ENCODE measurements at regions of chr2 and their contacts with region 1.

Region 1: DNA sequence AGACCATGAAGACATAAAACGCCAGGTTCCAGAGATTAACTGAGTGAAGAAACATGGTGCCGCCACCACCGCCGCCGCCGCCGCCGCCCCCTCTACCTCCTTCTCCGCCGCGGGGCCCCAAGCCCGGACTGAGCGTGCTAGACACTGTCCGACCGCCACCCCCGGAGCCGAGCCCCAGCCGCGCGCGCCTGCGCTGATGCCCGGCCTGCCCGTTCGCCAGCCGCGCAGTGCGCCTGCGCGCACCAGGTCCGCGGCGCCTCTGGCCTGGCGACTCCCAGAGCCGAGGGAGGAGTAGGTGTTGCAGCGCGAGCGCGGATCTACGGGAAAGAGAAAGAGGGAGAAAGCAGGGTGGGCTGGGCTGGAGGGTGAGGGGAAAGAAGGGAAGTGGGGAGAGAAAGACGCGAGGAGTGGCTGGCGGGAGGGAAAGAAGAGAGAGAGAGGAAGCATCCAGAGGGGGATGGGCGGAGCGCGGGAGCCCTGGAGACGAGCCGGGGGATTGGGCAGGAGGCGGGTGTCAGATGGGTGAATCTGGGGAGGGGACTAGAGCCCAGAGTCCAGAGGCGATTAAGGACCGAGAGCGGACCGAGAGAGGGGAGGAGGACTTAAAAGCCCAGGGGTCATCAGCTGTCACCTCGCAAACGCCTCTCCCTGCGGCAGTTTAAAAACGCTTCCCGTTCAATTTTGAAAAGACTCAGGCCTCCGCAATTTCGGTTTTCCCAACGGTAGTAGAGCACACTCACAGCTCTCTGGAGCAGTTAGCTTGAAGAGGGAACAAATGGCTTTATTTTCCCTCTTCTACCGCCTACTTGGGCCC is at the start of gene PGAP1:
- DNase-seq: peak; percentile 66 to 95 (median 72)
- ATAC-seq: peak; percentile 89
- H3K4me3 ChIP-seq: peak within 1 kb of the TSS; percentile 91
- H3K4me3 Mint-ChIP-seq: peak within 1 kb of the TSS; percentile 85 to 100 (median 96)
- H3K27ac ChIP-seq: peak within 1 kb of the TSS; percentile 79
- H3K27ac Mint-ChIP-seq: peak within 1 kb of the TSS; percentile 90 to 97 (median 94)
- H3K4me1 ChIP-seq: peaks cover 4 to 6% of the 10 kb centered on the region in 2 donors
- H3K4me1 Mint-ChIP-seq: peaks cover 22 to 43% (median 39%) of the 10 kb centered on the region in 7 donors
- H3K27me3 ChIP-seq: no peaks in the 10 kb centered on the region
- H3K27me3 Mint-ChIP-seq: peaks cover 0 to 2% (median 0%) of the 10 kb centered on the region in 5 donors
- total RNA-seq, gene PGAP1: 6.0 to 48.4 (median 6.9) TPM

Region 2: DNA sequence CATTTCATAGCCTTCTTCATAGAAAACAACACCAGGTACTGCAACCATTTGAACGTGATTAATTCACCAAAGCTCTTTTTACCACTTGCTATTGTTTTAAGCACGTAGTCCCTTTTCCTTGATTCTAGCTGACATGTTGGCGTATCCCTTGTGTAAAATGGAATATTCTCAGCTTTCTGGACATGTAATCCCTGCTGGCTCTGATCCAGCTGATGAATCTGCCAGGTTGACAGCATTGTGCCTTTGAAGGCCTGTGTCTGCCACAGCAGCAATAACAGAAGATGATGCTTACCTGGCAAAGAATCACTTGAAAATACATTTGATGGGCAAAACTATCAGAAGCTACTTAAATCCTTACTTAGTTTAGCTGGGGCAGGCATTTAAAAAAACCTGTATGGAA is 368.3 kb before region 1 on chr2:
- CTCF ChIA-PET with region 1: no interaction called
- POLR2A ChIA-PET with region 1: no interaction called
- intact Hi-C with region 1: no loop called
- DNase-seq: no peak
- ATAC-seq: no peak
- H3K4me3 ChIP-seq: no peak overlapping the region
- H3K4me3 Mint-ChIP-seq: no peak overlapping the region
- H3K27ac ChIP-seq: no peak overlapping the region
- H3K27ac Mint-ChIP-seq: no peak overlapping the region
- H3K4me1 ChIP-seq: no peaks in the 10 kb centered on the region
- H3K4me1 Mint-ChIP-seq: no peaks in the 10 kb centered on the region
- H3K27me3 ChIP-seq: no peaks in the 10 kb centered on the region
- H3K27me3 Mint-ChIP-seq: peaks cover 12 to 25% (median 23%) of the 10 kb centered on the region in 5 donors

Region 3: GRCh38 chr2:196798980-196799379 is 127.8 kb before region 1 on chr2:
- CTCF ChIA-PET with region 1: interaction called, 3 read pairs
- POLR2A ChIA-PET with region 1: interaction called, 8 read pairs
- intact Hi-C with region 1: loop called (anchors 1 kb)
- DNase-seq: peak in 1 of 9 donors; percentile 1
- ATAC-seq: peak; percentile 1
- H3K4me3 ChIP-seq: peak overlapping the region; percentile 98
- H3K4me3 Mint-ChIP-seq: peak overlapping the region; percentile 85 to 99 (median 96)
- H3K27ac ChIP-seq: peak overlapping the region; percentile 73
- H3K27ac Mint-ChIP-seq: peak overlapping the region; percentile 89 to 99 (median 91)
- H3K4me1 ChIP-seq: peaks cover 4 to 6% of the 10 kb centered on the region in 2 donors
- H3K4me1 Mint-ChIP-seq: peaks cover 17 to 52% (median 38%) of the 10 kb centered on the region in 7 donors
- H3K27me3 ChIP-seq: no peaks in the 10 kb centered on the region
- H3K27me3 Mint-ChIP-seq: peaks cover 0 to 4% (median 4%) of the 10 kb centered on the region in 5 donors

Region 4: DNA sequence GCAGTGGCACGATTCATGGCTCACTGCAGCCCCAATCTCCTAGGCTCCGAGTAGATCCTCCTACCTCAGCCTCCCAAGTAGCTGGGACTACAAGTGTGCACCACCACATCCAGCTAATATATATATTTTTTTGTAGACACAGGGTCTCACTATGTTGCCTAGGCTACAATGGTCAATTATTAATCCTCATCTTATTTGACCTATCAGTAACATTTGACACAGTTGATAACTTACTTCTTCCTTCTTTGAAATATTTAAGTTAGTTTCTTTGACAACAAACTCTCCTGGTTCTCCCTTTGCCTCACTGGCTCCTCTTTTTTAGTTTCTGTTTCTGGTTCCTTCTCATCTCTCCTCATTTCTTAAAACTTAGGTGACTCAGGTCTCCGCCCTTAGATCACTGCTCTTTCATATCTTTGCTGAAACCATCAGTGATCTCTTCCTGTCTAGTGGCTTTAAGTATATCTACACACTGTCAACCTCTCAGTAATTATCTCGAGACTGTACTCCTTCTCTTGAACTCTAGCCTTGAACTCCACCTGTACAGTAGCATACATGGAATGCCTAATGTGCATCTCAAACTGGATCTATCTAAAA is 11.8 kb before region 1 on chr2:
- CTCF ChIA-PET with region 1: interaction called, 6 read pairs
- POLR2A ChIA-PET with region 1: interaction called, 16 read pairs
- intact Hi-C with region 1: loop called (anchors 1 kb)
- DNase-seq: peak in 7 of 9 donors; percentile 39 to 67 (median 54)
- ATAC-seq: peak; percentile 97
- H3K4me3 ChIP-seq: peak overlapping the region; percentile 32
- H3K4me3 Mint-ChIP-seq: peak overlapping the region; percentile 6 to 84 (median 66)
- H3K27ac ChIP-seq: peak overlapping the region; percentile 51
- H3K27ac Mint-ChIP-seq: peak overlapping the region; percentile 75 to 97 (median 87)
- H3K4me1 ChIP-seq: peaks cover 16 to 19% of the 10 kb centered on the region in 2 donors
- H3K4me1 Mint-ChIP-seq: peaks cover 11 to 47% (median 26%) of the 10 kb centered on the region in 7 donors
- H3K27me3 ChIP-seq: no peaks in the 10 kb centered on the region
- H3K27me3 Mint-ChIP-seq: no peaks in the 10 kb centered on the region

Region 5: DNA sequence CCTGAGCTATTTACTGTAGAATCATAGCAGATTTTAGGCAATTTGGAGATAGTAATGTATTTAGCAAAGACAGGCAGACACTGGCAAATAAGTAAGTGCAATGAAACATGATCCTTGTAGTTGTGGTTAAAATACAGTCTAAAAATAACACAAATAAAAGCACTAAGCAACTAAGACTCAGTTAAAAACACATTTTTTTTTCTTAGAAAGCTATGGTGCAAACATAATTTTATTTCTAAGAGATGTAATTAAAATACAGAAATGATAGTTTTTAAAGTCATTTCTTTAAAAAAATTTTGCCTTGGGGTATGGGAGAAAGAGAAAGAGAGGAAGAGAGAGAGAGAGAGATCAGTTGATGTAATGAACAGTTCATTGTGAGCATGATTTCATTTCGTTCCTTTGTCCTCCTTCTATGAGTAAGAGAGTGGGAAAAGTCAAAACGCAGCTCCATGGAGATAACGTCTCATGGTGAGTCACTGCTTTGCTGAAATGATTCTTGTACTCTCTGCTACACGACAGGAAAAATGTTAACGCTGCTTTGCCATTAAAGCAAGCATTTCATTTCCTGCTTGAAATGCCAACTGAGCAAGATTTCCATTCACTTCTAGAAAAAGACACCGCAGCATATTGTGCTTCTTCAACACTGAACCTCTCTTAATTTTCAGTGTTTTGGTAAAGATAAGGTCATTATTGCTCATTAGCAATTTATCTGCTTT is 61.0 kb after region 1 on chr2:
- CTCF ChIA-PET with region 1: no interaction called
- POLR2A ChIA-PET with region 1: no interaction called
- intact Hi-C with region 1: loop called (anchors 1 to 5 kb)
- DNase-seq: peak in 1 of 9 donors; percentile 36
- ATAC-seq: peak; percentile 61
- H3K4me3 ChIP-seq: no peak overlapping the region
- H3K4me3 Mint-ChIP-seq: peak overlapping the region in 4 of 10 donors; percentile 1 to 85 (median 14)
- H3K27ac ChIP-seq: no peak overlapping the region
- H3K27ac Mint-ChIP-seq: peak overlapping the region; percentile 17 to 91 (median 76)
- H3K4me1 ChIP-seq: peaks cover 0 to 14% of the 10 kb centered on the region in 2 donors
- H3K4me1 Mint-ChIP-seq: peaks cover 21 to 53% (median 46%) of the 10 kb centered on the region in 7 donors
- H3K27me3 ChIP-seq: no peaks in the 10 kb centered on the region
- H3K27me3 Mint-ChIP-seq: no peaks in the 10 kb centered on the region

Region 6: DNA sequence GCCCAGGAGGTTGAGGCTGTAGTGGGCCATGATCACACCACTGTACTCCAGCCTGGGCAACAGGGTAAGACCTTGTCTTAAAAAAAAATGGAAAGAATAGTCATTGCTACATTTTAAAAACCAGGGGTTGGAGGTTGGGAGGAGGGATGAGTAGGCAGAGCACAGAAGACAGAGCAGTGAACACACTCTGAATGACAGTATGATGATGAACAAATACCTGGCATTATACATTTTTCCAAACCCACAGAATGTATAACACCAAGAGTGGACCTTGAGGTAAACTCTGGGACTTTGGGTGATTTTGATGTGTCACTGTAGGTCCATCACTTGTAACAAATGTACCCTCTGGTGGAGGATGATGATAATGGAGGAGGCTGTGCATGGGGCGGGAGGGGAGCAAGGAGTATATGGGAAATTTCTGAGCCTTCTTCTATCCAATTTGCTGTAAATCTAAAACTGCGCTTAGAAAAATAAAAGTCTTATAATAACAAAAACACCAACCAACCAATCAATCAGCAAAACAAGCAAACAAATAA is 111.2 kb after region 1 on chr2:
- CTCF ChIA-PET with region 1: no interaction called
- POLR2A ChIA-PET with region 1: no interaction called
- intact Hi-C with region 1: no loop called
- DNase-seq: no peak
- ATAC-seq: no peak
- H3K4me3 ChIP-seq: no peak overlapping the region
- H3K4me3 Mint-ChIP-seq: no peak overlapping the region
- H3K27ac ChIP-seq: no peak overlapping the region
- H3K27ac Mint-ChIP-seq: peak overlapping the region in 7 of 9 donors; percentile 15 to 83 (median 69)
- H3K4me1 ChIP-seq: peaks cover 3 to 6% of the 10 kb centered on the region in 2 donors
- H3K4me1 Mint-ChIP-seq: peaks cover 23 to 80% (median 57%) of the 10 kb centered on the region in 7 donors
- H3K27me3 ChIP-seq: no peaks in the 10 kb centered on the region
- H3K27me3 Mint-ChIP-seq: no peaks in the 10 kb centered on the region

Region 7: DNA sequence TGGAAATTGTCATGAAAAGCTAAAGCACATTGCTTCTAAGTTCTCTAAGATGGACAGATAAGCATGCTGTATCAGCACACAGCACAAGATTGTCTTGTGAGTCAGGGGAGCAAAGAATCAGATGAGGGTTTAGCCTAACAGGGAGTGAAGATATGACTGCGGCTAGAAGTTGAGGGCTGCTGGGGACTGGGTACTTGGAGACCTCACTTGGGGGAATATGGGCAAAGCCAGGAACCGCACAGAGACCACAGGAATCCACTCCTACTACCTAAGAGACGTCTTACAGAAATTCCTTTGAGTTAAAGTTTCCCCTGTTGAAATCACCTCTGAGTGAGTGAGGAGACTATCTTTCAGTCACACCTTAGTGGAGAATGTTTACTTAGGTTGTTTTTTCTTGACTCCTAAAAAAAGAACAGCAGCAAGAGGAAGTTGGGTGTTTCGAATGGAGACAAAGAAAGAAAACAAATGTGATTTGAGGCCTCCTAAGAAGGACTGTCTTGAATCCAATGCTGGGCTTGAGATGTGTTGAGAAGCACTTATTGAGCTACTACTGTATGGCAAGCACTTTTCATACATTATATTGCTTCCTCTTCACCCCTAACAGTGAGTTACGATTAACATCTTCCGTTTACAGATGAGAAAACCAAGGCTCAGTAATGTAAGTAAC is 283.1 kb after region 1 on chr2:
- CTCF ChIA-PET with region 1: no interaction called
- POLR2A ChIA-PET with region 1: no interaction called
- intact Hi-C with region 1: no loop called
- DNase-seq: peak in 5 of 9 donors; percentile 34 to 73 (median 50)
- ATAC-seq: peak; percentile 23
- H3K4me3 ChIP-seq: peak overlapping the region; percentile 12
- H3K4me3 Mint-ChIP-seq: peak overlapping the region; percentile 61 to 86 (median 78)
- H3K27ac ChIP-seq: peak overlapping the region; percentile 82
- H3K27ac Mint-ChIP-seq: peak overlapping the region; percentile 79 to 100 (median 98)
- H3K4me1 ChIP-seq: peaks cover 93 to 98% of the 10 kb centered on the region in 2 donors
- H3K4me1 Mint-ChIP-seq: peaks cover 76 to 99% (median 97%) of the 10 kb centered on the region in 7 donors
- H3K27me3 ChIP-seq: no peaks in the 10 kb centered on the region
- H3K27me3 Mint-ChIP-seq: no peaks in the 10 kb centered on the region

Region 8: DNA sequence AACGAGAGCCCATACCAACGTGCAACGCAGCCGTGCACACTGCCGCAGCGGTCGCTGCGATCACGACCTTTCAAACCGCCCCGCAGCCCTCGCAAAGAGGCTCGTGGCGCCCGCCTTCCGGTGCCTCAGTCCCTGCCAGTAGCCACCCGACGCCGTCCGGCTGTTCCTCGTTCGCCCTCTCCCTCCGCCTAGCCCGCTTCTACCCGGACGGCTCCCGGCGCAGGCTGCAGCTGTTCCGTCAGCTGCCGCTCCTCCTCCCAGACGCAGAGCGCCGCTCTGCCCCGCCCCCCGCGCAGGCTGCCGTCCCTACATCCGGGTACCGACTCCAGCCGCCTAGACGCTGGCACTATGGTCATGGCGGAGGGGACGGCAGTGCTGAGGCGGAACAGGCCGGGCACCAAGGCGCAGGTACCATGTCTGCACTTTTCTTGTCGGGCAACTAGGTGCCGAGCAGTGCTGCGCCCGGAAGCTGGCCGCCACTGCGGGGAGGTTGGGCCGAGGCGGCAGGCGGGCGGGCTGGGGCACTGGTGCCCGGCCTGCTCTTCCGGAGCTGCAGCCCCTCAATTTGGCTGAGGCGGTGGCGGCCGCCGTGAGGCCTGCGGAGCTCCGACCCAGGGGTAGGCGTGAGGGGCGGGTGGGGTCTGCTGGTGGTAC is 589.1 kb after region 1 on chr2 and contains the start of gene MOB4:
- CTCF ChIA-PET with region 1: no interaction called
- POLR2A ChIA-PET with region 1: no interaction called
- intact Hi-C with region 1: loop called in 1 of 2 experiments (anchors 5 kb)
- DNase-seq: peak; percentile 87 to 98 (median 92)
- ATAC-seq: peak; percentile 97
- H3K4me3 ChIP-seq: peak within 1 kb of the TSS; percentile 75
- H3K4me3 Mint-ChIP-seq: peak within 1 kb of the TSS; percentile 85 to 99 (median 98)
- H3K27ac ChIP-seq: peak within 1 kb of the TSS; percentile 86
- H3K27ac Mint-ChIP-seq: peak within 1 kb of the TSS; percentile 88 to 99 (median 95)
- H3K4me1 ChIP-seq: peaks cover 10 to 12% of the 10 kb centered on the region in 2 donors
- H3K4me1 Mint-ChIP-seq: peaks cover 28 to 49% (median 40%) of the 10 kb centered on the region in 7 donors
- H3K27me3 ChIP-seq: no peaks in the 10 kb centered on the region
- H3K27me3 Mint-ChIP-seq: no peaks in the 10 kb centered on the region
- total RNA-seq, gene MOB4: 16.1 to 22.5 (median 17.9) TPM